Ascending aorta (tissue), 2 donors: ENCODE measurements at regions of chr17 and their contacts with region 1.

Region 1: DNA sequence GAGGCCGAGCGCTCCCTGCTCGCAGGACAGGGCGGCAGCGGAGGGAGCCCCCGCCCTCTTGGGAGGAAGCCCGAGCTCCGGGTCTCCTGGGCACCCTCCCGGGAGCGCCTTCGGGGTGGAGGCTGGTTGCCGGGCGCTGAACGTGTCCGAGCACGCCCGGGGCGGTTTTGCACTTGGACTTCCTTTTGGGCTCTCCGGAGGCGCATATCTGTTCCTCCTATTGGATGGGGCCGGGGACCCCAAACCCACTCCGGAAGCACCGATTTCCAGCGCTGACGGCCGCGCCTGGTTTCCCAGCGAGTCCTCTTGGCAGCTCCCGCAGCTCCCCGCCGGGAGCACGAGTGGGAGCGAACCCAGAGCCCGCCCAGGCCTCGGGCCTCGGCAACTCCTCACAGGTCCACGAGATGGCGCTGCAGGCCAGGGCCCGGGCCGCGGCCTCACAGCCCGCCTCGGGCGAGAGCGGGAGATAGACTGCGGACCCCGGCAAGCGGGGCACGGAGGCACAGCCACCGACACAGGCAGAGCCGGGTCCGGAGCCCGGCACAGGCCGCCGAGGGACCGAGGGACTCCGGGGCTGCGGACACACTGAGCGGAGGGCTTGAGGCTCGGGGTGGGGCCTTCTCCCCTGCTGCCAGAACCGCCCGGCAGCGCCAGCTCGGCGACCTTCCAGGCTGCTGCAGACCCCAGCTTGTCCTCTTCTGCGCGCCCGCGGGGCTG is 12.7 kb downstream of the TBX2 start:
- DNase-seq: peak; percentile 35 to 91
- H3K4me3 ChIP-seq: peak overlapping the region; percentile 78 to 80
- H3K27ac ChIP-seq: peak overlapping the region; percentile 94 to 96
- H3K4me1 ChIP-seq: peaks cover 9 to 40% of the 10 kb centered on the region in 2 donors
- H3K27me3 ChIP-seq: no peaks in the 10 kb centered on the region
- CTCF ChIP-seq: peak; percentile 99 to 100 (median 99)

Region 2: GRCh38 chr17:60392042-60392844 is 1020.1 kb before region 1 on chr17 and contains the start of gene USP32:
- intact Hi-C with region 1: loop called (anchors 5 kb)
- DNase-seq: peak; percentile 94 to 99
- H3K4me3 ChIP-seq: peak within 1 kb of the TSS; percentile 90 to 91
- H3K27ac ChIP-seq: peak within 1 kb of the TSS; percentile 88 to 93
- H3K4me1 ChIP-seq: peaks cover 0 to 17% of the 10 kb centered on the region in 2 donors
- H3K27me3 ChIP-seq: no peaks in the 10 kb centered on the region
- CTCF ChIP-seq: peak in 2 of 3 experiments; percentile 22 to 25
- total RNA-seq, gene USP32: 11.9 TPM

Region 3: GRCh38 chr17:60599620-60600489 is 812.4 kb before region 1 on chr17 and contains the start of gene PPM1D:
- intact Hi-C with region 1: loop called (anchors 5 kb)
- DNase-seq: peak; percentile 94 to 99
- H3K4me3 ChIP-seq: peak within 1 kb of the TSS; percentile 73 to 94
- H3K27ac ChIP-seq: peak within 1 kb of the TSS; percentile 97 to 98
- H3K4me1 ChIP-seq: peaks cover 0 to 15% of the 10 kb centered on the region in 2 donors
- H3K27me3 ChIP-seq: no peaks in the 10 kb centered on the region
- CTCF ChIP-seq: peak in 1 of 3 experiments; percentile 11
- total RNA-seq, gene PPM1D: 6.0 TPM

Region 4: DNA sequence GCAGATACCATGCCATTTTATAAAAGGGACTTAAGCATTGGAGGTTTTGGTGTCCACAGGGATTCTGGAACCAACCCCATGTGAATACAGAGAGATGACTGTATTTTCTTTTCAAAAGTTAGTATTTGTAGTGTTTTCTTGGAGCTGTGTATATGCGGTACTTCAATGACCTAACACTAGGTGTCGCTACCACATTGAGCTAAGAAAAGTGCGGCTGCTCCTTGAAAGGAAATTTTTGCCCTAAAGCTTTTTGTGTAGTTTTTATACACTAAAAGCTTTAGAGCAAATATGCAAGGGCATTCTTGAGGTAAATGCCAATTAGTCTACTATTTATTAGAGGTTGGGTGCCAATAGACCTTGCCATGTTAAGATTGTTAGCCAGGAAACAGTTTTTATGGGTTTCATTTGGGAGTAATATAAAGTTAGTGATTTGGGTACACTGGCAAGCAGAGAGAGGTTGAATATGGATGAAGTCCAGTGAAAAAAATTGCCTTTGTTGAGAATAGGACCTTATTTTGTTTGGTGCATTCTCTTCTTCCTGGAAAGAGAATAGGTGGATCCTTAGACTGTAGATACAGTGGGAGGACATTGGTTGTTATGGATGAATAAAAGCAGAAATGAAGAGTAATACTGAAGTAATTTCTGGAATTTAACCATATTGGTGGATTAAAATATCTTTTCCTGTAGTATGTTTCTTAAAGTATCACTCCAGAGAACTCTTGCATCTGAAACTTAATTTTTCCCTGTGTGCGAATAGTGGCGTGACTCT is 691.4 kb before region 1 on chr17:
- intact Hi-C with region 1: loop called (anchors 2 kb)
- DNase-seq: no peak
- H3K4me3 ChIP-seq: no peak overlapping the region
- H3K27ac ChIP-seq: no peak overlapping the region
- H3K4me1 ChIP-seq: peaks cover 0 to 3% of the 10 kb centered on the region in 2 donors
- H3K27me3 ChIP-seq: no peaks in the 10 kb centered on the region
- CTCF ChIP-seq: peak; percentile 76 to 88 (median 87)

Region 5: DNA sequence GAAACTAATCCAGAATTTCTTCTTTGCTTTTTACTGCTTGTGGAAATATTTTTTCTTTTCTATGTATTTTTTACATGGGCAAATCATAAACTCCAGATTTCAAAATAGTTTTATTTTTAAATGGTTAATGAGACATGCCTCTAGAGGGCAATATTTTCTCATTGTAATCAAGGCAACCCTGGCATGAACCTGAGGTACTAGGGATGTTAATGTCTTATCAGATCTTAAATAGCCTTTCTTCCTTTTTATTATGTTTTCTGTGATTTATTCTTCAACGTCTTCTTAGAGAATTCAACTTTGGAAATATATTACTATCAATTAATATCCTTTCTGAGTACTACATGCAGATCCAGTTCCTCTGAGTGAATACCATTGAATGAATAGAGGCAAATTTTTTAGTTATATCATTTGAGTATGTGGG is 410.0 kb before region 1 on chr17:
- intact Hi-C with region 1: loop called (anchors 5 kb)
- DNase-seq: no peak
- H3K4me3 ChIP-seq: no peak overlapping the region
- H3K27ac ChIP-seq: no peak overlapping the region
- H3K4me1 ChIP-seq: no peaks in the 10 kb centered on the region
- H3K27me3 ChIP-seq: no peaks in the 10 kb centered on the region
- CTCF ChIP-seq: peak; percentile 29 to 54 (median 53)

Region 6: GRCh38 chr17:61837175-61838051 is 425.1 kb after region 1 on chr17:
- intact Hi-C with region 1: loop called (anchors 2 kb)
- DNase-seq: no peak
- H3K4me3 ChIP-seq: no peak overlapping the region
- H3K27ac ChIP-seq: no peak overlapping the region
- H3K4me1 ChIP-seq: no peaks in the 10 kb centered on the region
- H3K27me3 ChIP-seq: no peaks in the 10 kb centered on the region
- CTCF ChIP-seq: peak in 2 of 3 experiments; percentile 33 to 46

Region 7: DNA sequence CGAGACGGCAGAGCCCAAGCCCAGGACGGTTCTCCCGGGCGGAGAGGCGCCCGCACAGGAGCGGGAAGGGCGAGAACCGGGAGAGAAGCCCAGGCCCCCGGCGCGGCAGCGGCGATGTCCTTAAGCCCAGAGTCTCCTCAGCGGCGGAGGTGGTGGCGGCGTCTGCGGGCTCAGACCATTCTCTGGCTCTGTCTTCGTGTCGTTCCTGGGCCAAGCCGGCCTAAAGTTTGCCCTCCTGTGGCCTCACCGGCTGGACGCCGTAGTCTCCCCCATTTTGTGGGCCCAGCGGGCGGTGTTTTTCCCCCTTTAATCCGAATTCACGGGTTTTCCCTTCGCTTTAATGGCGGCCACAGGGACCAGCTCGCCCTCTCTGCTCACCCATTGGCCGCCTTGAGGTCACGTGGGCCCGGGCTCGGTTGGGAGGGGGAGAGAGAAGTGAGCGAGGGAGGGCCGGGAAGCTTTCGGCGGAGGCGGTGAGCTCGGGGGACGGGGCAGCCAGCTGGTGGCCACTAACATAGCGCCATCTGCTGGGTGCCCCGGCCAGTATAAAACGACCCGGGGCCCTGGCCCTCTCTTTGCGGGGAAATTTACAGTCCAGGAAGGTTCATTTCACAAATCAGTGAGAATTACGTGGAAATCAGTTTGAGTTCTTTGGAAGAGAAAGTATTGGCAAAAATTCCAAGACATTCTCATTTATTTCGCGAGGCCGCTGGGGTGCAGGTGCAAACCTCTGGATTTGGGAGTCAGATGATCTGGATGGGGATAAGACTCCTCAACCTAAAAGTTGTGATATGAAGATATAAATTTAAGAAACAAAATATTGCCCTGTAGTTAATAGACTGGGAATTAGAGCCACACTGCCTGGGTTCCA is 653.5 kb after region 1 on chr17:
- intact Hi-C with region 1: loop called (anchors 2 kb)
- DNase-seq: peak; percentile 94 to 99
- H3K4me3 ChIP-seq: peak overlapping the region; percentile 65 to 82
- H3K27ac ChIP-seq: peak overlapping the region; percentile 97 to 99
- H3K4me1 ChIP-seq: peaks cover 0 to 20% of the 10 kb centered on the region in 2 donors
- H3K27me3 ChIP-seq: no peaks in the 10 kb centered on the region
- CTCF ChIP-seq: peak; percentile 87 to 89 (median 88)